ENCODE measurements at regions of chr2 and their contacts with region 1.

Region 1: DNA sequence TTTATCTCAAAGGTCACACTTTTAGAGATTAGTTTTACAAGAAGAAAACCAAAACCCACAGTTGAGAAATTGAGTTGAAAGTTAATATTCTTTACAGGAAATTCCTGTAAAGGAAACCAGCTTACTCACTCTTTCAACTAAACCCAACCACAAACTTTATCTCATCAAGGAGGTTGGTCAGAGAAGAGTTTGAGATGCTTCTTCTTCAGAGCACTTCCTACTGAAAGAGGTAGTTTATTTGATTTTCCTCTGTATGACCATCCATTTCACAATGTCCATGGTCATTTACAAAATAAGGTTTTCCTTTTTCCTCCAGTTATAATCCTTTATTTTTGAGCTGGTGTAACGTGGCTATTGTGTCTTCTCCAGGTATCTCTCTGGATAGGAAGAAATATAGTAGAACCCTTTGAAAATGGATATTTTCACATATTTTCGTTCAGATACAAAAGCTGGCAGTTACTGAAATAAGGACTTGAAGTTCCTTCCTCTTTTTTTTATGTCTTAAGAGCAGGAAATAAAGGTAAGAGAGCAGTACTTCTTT is 4.5 kb upstream of the IL18RAP start:
- DNase-seq: peak in 2 of 9 experiments; percentile 66 to 80
- ATAC-seq: peak; percentile 71
- H3K4me3 ChIP-seq: peak overlapping the region in 1 of 2 experiments; percentile 40
- H3K4me3 Mint-ChIP-seq: peak overlapping the region; percentile 79
- H3K27ac ChIP-seq: peak overlapping the region; percentile 32 to 75
- H3K27ac Mint-ChIP-seq: peak overlapping the region; percentile 90
- H3K4me1 ChIP-seq: peaks cover 32% of the 10 kb centered on the region
- H3K4me1 Mint-ChIP-seq: peaks cover 62% of the 10 kb centered on the region
- H3K27me3 ChIP-seq: no peaks in the 10 kb centered on the region
- H3K27me3 Mint-ChIP-seq: no peaks in the 10 kb centered on the region
- CTCF ChIP-seq: no peak

Region 2: DNA sequence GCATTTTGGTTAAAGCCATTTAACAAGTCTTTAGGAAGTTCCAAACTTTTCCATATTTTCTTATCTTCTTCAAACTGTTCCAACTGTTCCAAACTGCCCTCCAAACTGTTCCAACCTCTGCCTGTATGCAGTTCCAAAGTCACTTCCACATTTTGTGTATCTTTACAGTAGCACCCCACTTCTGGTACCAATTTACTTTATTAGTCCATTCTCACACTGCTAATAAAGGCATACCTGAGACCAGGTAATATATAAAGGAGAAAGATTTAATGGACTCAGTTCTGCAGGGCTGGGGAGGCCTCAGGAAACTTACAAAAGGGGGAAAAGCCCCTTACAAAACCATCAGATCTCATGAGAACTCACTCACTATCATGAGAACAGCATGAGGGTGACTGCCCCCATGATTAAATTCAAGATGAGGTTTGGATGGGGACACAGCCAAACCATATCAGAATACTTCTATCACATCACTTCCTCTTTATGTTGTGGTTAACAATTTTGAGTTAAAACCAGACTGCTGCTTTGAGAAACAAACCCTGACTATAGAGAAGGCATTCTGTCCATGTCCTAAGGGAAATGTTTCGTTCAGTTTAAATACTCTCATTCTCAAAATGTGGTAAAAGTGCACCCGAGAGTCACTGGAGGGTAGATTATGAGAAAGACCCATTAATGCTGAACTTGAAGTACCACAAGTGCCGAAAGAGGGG is 51.9 kb before region 1 on chr2:
- CTCF ChIA-PET with region 1: no interaction called
- POLR2A ChIA-PET with region 1: interaction called, 3 read pairs
- intact Hi-C with region 1: loop called in 1 of 2 experiments (anchors 2 kb)
- DNase-seq: peak in 2 of 9 experiments; percentile 54 to 73
- ATAC-seq: peak; percentile 24
- H3K4me3 ChIP-seq: peak overlapping the region; percentile 13 to 16
- H3K4me3 Mint-ChIP-seq: peak overlapping the region; percentile 63
- H3K27ac ChIP-seq: peak overlapping the region; percentile 22 to 56
- H3K27ac Mint-ChIP-seq: peak overlapping the region; percentile 89
- H3K4me1 ChIP-seq: peaks cover 36% of the 10 kb centered on the region
- H3K4me1 Mint-ChIP-seq: peaks cover 62% of the 10 kb centered on the region
- H3K27me3 ChIP-seq: no peaks in the 10 kb centered on the region
- H3K27me3 Mint-ChIP-seq: no peaks in the 10 kb centered on the region
- CTCF ChIP-seq: no peak

Measured in CD8-positive, alpha-beta T cell (primary cell).